Heart right ventricle (tissue), 16 donors: ENCODE measurements at regions of chr19 and their contacts with region 1.

Region 1: GRCh38 chr19:19366612-19367396 is 38.7 kb upstream of the GATAD2A start:
- DNase-seq: peak; percentile 54 to 74
- ATAC-seq: peak; percentile 66 to 84 (median 80)
- H3K4me3 ChIP-seq: peak overlapping the region in 1 of 10 donors; percentile 8
- H3K27ac ChIP-seq: peak overlapping the region in 1 of 10 donors; percentile 2
- H3K4me1 ChIP-seq: peaks cover 5 to 29% (median 19%) of the 10 kb centered on the region in 9 donors
- H3K27me3 ChIP-seq: no peaks in the 10 kb centered on the region
- CTCF ChIP-seq: peak; percentile 81 to 99 (median 95)

Region 2: DNA sequence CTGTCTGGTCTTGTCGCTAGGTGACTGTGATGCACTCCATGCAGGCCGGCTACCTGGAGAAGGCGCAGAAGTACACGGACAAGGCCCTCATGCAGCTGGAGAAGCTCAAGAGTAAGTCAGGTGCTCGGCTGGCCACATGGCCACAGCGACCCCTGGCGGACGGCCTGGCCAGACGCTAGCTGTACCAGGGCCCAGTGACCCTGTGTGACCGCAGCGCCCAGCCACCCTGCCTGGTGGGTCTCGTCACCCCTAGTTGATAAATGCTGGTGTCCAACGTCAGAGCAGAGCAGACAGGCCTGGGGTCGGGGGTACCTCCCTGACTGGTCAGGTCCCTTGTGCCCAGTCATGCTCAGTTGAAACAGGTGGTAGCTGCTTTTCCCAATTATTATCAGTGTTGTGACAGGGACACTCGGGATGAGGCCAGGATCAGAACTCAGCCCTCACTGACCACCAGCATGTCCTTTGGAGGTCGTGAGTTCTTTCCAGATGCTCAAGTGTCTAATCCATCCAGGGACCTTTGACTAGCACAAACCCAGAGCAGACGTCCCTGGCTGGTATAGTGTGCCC is 24.0 kb before region 1 on chr19:
- intact Hi-C with region 1: no loop called
- DNase-seq: peak; percentile 50 to 64
- ATAC-seq: peak; percentile 68 to 88 (median 76)
- H3K4me3 ChIP-seq: no peak overlapping the region
- H3K27ac ChIP-seq: no peak overlapping the region
- H3K4me1 ChIP-seq: peaks cover 0 to 8% (median 0%) of the 10 kb centered on the region in 9 donors
- H3K27me3 ChIP-seq: no peaks in the 10 kb centered on the region
- CTCF ChIP-seq: peak; percentile 52 to 85 (median 78)

Region 3: DNA sequence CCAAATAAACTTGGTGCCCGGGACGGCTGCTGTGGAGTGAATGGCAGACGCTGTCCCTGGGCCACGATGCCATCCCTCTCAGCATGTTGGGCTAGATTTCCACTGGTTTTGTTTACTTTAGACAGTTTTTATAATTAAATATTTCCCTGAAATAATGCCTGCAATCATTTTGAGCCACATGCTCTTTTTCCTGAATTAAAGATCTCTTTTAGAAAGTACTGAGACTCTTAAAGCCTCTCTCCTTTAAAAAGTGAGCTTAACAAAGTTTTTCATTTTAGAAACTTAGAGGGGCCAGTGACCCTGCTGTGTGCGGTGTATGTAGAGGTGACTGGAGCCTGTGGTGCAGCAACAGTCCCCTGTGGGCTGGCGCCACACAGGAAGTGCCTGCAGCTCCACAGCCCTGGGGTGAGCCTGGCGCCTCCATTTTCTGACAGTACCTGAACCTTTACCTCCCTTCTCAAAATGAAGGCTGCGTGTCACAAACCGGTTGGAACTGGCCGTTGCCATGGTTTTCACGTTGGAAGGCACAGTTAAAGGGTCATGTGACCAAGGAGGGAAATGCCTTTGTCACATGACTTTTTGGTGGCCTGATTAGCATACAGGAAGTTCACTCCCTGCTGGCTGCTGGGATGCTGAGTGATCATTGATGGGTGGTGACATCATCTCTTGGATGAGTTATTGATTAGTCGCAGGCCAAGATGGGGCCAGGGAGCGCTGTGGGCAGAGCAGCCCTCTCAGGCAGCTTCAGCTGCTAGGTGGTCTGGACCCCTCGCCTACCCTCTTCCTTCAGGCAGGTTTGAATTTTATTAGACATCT is 122.3 kb after region 1 on chr19:
- intact Hi-C with region 1: loop called (anchors 1 to 5 kb)
- DNase-seq: peak; percentile 61 to 87
- ATAC-seq: peak; percentile 42 to 84 (median 73)
- H3K4me3 ChIP-seq: peak overlapping the region in 7 of 10 donors; percentile 18 to 47 (median 26)
- H3K27ac ChIP-seq: peak overlapping the region; percentile 36 to 91 (median 80)
- H3K4me1 ChIP-seq: peaks cover 22 to 66% (median 49%) of the 10 kb centered on the region in 9 donors
- H3K27me3 ChIP-seq: no peaks in the 10 kb centered on the region
- CTCF ChIP-seq: no peak